ENCODE measurements at regions of chr2 and their contacts with region 1.

Region 1: DNA sequence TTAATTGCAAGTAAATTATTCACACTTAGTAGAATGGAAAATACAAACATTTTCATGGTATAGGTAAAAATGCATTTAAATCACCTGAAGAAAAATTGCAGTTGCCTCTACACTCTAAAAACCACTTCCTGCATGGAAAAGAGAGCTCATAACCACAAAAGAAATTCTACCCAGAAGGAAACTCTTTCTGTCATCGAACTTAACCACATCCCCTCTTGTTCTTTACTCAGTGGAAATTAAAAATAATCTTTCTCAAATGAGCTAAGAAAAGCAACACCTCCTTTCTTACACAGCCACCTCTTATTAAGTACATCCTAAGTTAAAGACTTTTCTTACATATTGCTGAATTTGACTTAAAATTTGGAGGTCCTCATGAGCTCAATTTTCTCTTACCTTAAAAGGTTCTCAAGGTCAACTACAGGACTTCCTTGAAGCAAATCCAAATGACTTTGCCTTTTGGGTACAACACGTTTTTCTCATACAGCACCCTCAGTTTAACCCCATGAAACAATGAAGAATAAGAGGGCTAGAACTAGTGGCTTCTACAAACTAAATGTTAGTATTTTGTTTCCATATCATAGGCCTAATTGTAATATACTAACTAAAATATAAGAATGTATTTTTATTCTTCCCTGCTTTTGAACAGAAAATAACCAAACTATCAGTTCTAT is 109.1 kb upstream of the CRIM1 start:
- DNase-seq: peak in 7 of 9 donors; percentile 68 to 87 (median 84)
- ATAC-seq: peak; percentile 89
- H3K4me3 ChIP-seq: no peak overlapping the region
- H3K4me3 Mint-ChIP-seq: peak overlapping the region; percentile 31 to 81 (median 74)
- H3K27ac ChIP-seq: no peak overlapping the region
- H3K27ac Mint-ChIP-seq: peak overlapping the region; percentile 11 to 93 (median 68)
- H3K4me1 ChIP-seq: peaks cover 21 to 52% of the 10 kb centered on the region in 2 donors
- H3K4me1 Mint-ChIP-seq: peaks cover 27 to 68% (median 61%) of the 10 kb centered on the region in 7 donors
- H3K27me3 ChIP-seq: no peaks in the 10 kb centered on the region
- H3K27me3 Mint-ChIP-seq: peaks cover 0 to 13% (median 8%) of the 10 kb centered on the region in 5 donors

Region 2: DNA sequence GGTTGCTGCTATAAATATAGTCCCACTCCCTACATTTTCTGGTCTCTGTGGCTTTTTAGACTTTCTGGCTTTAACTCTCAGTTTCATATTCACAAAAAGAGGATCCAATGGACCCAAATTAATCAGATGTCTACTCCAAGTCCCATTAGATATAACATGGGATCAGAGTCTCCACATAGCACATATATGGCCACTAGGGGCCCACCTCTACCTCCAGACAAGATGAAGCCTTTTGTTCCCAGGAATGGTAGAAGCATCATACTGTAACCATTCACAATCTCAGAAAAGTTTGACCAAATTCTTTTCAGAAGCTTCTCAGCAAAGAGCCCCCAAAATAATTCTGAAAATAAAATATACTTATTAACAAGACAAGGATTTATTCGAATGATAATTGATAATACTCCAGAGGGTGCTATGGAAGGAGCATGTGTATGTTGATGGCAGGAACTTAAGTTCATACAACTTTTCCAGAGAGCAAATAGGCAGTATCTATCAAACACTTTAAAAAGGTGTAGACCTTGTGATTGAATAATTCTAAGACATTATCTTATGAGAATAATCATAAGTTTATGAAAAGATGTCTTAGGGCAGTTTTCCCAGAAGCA is 273.2 kb before region 1 on chr2:
- CTCF ChIA-PET with region 1: no interaction called
- POLR2A ChIA-PET with region 1: no interaction called
- intact Hi-C with region 1: loop called (anchors 1 to 5 kb)
- DNase-seq: no peak
- ATAC-seq: peak; percentile 47
- H3K4me3 ChIP-seq: no peak overlapping the region
- H3K4me3 Mint-ChIP-seq: no peak overlapping the region
- H3K27ac ChIP-seq: no peak overlapping the region
- H3K27ac Mint-ChIP-seq: peak overlapping the region in 1 of 9 donors; percentile 44
- H3K4me1 ChIP-seq: peaks cover 0 to 12% of the 10 kb centered on the region in 2 donors
- H3K4me1 Mint-ChIP-seq: peaks cover 0 to 7% (median 0%) of the 10 kb centered on the region in 7 donors
- H3K27me3 ChIP-seq: no peaks in the 10 kb centered on the region
- H3K27me3 Mint-ChIP-seq: peaks cover 0 to 26% (median 0%) of the 10 kb centered on the region in 5 donors

Region 3: DNA sequence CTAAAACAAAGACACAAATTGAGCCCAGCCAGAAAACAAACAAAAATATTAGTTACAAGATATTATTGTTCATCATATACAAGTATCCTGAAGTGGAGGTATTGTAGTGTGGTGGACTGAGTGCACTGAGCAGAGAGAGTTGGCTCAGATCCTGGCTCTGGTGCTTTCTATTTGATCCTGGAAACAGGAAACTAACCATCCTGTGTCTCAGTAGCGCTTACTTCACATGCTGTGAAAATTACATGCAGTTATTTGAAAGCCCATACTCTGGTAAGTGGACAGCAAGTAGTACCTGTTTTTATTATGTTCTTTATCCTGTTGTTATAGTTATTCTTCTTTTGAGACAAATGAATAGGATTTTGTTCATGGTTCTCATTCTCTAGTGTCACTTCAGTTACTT is 24.8 kb after region 1 on chr2:
- CTCF ChIA-PET with region 1: no interaction called
- POLR2A ChIA-PET with region 1: no interaction called
- intact Hi-C with region 1: loop called in 1 of 2 experiments (anchors 2 kb)
- DNase-seq: no peak
- ATAC-seq: no peak
- H3K4me3 ChIP-seq: no peak overlapping the region
- H3K4me3 Mint-ChIP-seq: peak overlapping the region in 3 of 10 donors; percentile 7 to 16 (median 8)
- H3K27ac ChIP-seq: no peak overlapping the region
- H3K27ac Mint-ChIP-seq: peak overlapping the region in 1 of 9 donors; percentile 4
- H3K4me1 ChIP-seq: peaks cover 0 to 3% of the 10 kb centered on the region in 2 donors
- H3K4me1 Mint-ChIP-seq: peaks cover 7 to 13% (median 12%) of the 10 kb centered on the region in 7 donors
- H3K27me3 ChIP-seq: no peaks in the 10 kb centered on the region
- H3K27me3 Mint-ChIP-seq: peaks cover 0 to 4% (median 0%) of the 10 kb centered on the region in 5 donors

Region 4: DNA sequence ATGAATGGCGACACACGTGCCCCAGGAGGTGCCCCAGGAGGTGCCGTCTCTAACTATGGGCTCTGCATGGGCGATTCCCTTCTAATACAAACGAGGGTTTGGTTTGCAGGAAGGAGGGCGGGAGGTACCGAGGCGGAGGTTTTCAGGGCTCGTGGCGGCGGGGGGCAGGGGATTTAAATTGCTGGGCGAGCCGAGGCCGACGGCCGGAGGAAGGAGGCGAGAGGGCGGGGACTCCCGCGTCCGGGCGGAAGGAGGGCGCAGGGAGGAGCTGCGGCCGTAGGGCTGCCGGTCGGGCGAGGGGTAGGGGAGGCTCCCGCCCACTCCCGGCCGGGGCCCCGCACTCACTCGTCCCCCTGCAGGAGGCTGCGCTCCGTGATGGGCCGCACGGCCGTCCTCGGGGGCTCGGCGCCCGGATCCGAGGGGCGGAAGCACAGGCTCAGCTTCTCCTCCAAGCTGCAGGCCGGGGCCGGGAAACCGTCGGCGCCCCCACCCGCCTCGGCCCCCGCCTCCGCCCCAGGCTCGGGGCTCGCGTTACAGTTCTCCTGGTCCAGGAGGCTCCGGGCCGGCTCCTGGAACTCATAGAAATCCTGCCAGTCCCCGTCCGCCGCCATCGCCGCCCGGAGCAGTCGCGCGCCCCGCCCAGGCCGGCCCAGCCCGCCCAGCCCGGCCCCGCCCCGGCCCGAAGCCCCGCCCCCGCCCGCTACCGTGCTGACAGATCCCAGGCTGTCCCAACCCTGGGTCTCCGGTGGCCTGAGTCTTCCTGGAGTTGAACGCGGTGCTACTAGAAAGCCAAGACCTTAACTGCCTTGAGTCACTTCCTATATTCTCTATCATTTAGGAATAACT is 351.3 kb after region 1 on chr2 and contains the start of gene FEZ2:
- CTCF ChIA-PET with region 1: no interaction called
- POLR2A ChIA-PET with region 1: no interaction called
- intact Hi-C with region 1: loop called in 1 of 2 experiments (anchors 5 kb)
- DNase-seq: peak; percentile 24 to 80 (median 41)
- ATAC-seq: peak; percentile 92
- H3K4me3 ChIP-seq: peak within 1 kb of the TSS; percentile 63
- H3K4me3 Mint-ChIP-seq: peak within 1 kb of the TSS; percentile 91 to 98 (median 92)
- H3K27ac ChIP-seq: peak within 1 kb of the TSS; percentile 60
- H3K27ac Mint-ChIP-seq: peak within 1 kb of the TSS; percentile 69 to 97 (median 83)
- H3K4me1 ChIP-seq: peaks cover 9 to 16% of the 10 kb centered on the region in 2 donors
- H3K4me1 Mint-ChIP-seq: peaks cover 26 to 45% (median 35%) of the 10 kb centered on the region in 7 donors
- H3K27me3 ChIP-seq: no peaks in the 10 kb centered on the region
- H3K27me3 Mint-ChIP-seq: no peaks in the 10 kb centered on the region
- total RNA-seq, gene FEZ2: 11.2 to 21.9 (median 14.0) TPM

Region 5: GRCh38 chr2:36650031-36650430 is 403.6 kb after region 1 on chr2:
- CTCF ChIA-PET with region 1: no interaction called
- POLR2A ChIA-PET with region 1: no interaction called
- intact Hi-C with region 1: no loop called
- DNase-seq: no peak
- ATAC-seq: no peak
- H3K4me3 ChIP-seq: no peak overlapping the region
- H3K4me3 Mint-ChIP-seq: no peak overlapping the region
- H3K27ac ChIP-seq: no peak overlapping the region
- H3K27ac Mint-ChIP-seq: no peak overlapping the region
- H3K4me1 ChIP-seq: no peaks in the 10 kb centered on the region
- H3K4me1 Mint-ChIP-seq: no peaks in the 10 kb centered on the region
- H3K27me3 ChIP-seq: no peaks in the 10 kb centered on the region
- H3K27me3 Mint-ChIP-seq: peaks cover 0 to 7% (median 3%) of the 10 kb centered on the region in 5 donors

Region 6: DNA sequence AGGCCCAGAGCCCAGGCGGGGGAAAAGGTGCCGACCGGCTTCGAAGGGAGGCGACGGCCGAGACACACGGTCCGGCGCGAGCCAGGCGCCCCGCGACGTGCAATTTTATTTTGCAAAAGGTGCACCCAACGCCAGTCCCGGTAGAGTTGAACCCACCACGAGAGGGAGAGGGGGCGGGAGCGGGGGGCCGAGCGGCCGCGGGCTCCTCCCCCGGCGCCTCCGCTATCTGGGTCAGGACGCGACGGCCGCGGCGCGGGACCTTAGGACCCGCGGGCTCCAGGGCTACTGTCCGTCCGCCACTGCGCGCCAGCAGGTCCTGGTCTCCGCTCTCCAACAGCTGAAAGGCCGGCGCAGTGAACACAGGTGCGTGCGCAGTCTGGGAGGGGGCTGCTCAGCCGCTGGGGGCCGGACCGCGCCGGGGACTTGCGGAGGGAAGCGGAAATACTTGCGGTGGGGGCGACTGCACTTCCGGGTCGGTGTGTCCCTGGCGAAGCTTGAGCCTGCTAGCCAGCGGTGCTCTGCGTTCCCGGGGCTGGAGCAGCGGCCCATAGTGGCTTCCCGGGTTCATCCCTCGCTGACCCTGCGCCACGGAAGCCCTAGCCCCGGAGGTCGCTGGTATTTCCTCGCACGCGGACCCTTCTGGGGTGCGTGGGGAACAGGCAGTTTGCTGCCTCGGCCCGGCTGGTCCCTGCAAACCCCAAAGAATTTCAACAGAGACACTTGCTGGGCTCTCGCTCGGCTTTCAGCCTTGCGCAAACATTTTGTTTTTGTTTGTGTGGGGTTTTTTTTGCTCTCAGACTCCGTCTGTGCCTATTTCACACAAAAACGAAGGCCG is 1678.8 kb after region 1 on chr2 and contains the start of gene RMDN2:
- CTCF ChIA-PET with region 1: no interaction called
- POLR2A ChIA-PET with region 1: no interaction called
- intact Hi-C with region 1: loop called in 1 of 2 experiments (anchors 5 kb)
- DNase-seq: peak; percentile 57 to 78 (median 71)
- ATAC-seq: peak; percentile 88
- H3K4me3 ChIP-seq: peak within 1 kb of the TSS; percentile 81
- H3K4me3 Mint-ChIP-seq: peak within 1 kb of the TSS; percentile 89 to 100 (median 98)
- H3K27ac ChIP-seq: peak within 1 kb of the TSS; percentile 73
- H3K27ac Mint-ChIP-seq: peak within 1 kb of the TSS; percentile 67 to 100 (median 96)
- H3K4me1 ChIP-seq: peaks cover 0 to 8% of the 10 kb centered on the region in 2 donors
- H3K4me1 Mint-ChIP-seq: peaks cover 8 to 50% (median 24%) of the 10 kb centered on the region in 7 donors
- H3K27me3 ChIP-seq: no peaks in the 10 kb centered on the region
- H3K27me3 Mint-ChIP-seq: peaks cover 0 to 60% (median 0%) of the 10 kb centered on the region in 5 donors
- total RNA-seq, gene RMDN2: 0.39 to 8.1 (median 5.1) TPM

Measured in naive thymus-derived CD4-positive, alpha-beta T cell (primary cell).